ENCODE measurements at regions of chr9 and their contacts with region 1.

Region 1: GRCh38 chr9:81492710-81493447 is 196.5 kb downstream of the TLE1 start:
- DNase-seq: no peak
- H3K4me3 ChIP-seq: no peak overlapping the region
- H3K27ac ChIP-seq: no peak overlapping the region
- H3K4me1 ChIP-seq: peaks cover 0 to 16% of the 10 kb centered on the region in 2 donors
- H3K27me3 ChIP-seq: no peaks in the 10 kb centered on the region
- CTCF ChIP-seq: no peak

Region 2: GRCh38 chr9:81083067-81083466 is 409.8 kb before region 1 on chr9:
- intact Hi-C with region 1: loop called (anchors 10 kb)
- DNase-seq: no peak
- H3K4me3 ChIP-seq: no peak overlapping the region
- H3K27ac ChIP-seq: no peak overlapping the region
- H3K4me1 ChIP-seq: peaks cover 0 to 16% of the 10 kb centered on the region in 2 donors
- H3K27me3 ChIP-seq: no peaks in the 10 kb centered on the region
- CTCF ChIP-seq: peak in 2 of 3 experiments; percentile 13 to 14

Region 3: DNA sequence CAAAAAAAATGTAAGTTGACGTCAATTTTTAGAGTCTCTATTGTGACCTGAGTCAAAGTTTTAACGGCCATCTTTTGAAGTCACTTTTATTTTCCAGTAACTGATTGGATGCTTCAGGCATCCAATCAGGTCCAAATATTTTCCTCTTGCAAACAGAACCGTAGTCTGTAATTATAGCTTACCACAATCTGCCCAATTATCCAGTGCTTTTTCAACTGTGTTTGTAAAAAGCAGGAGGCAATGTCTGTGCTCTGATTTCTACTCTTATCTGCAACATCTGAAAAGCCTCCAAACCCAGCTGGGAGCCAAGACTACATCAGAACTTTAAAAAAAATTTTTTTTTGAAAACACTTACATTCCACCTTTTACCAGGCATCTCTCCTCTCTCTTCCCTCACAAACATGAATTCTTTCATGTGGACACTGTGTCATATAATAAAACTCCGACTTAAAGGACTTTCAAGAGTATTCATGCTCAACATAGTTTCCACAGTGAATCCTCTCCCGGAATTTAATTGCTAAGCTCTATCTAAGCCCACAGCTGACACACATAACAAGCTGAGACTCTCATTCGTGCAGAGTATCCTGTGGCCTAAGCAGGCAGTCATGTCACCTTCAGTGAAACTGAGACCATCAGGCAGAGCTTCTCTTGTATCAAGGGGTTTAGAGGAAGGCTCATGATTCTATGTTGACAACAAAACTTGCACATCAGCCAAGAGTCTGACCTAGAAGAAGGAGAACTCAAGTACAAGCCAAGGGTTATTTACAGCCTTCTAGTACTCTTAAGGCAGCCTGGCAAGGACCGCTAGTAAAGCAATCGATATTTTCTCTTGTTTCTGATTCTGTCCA is 76.2 kb before region 1 on chr9:
- intact Hi-C with region 1: no loop called
- DNase-seq: no peak
- H3K4me3 ChIP-seq: no peak overlapping the region
- H3K27ac ChIP-seq: peak overlapping the region; percentile 33 to 41
- H3K4me1 ChIP-seq: peaks cover 0 to 4% of the 10 kb centered on the region in 2 donors
- H3K27me3 ChIP-seq: no peaks in the 10 kb centered on the region
- CTCF ChIP-seq: no peak

Region 4: GRCh38 chr9:81588148-81588871 is 95.4 kb after region 1 on chr9:
- intact Hi-C with region 1: loop called (anchors 5 kb)
- DNase-seq: peak; percentile 49 to 93
- H3K4me3 ChIP-seq: peak overlapping the region in 1 of 2 donors; percentile 11
- H3K27ac ChIP-seq: peak overlapping the region; percentile 83 to 90
- H3K4me1 ChIP-seq: peaks cover 27 to 58% of the 10 kb centered on the region in 2 donors
- H3K27me3 ChIP-seq: no peaks in the 10 kb centered on the region
- CTCF ChIP-seq: no peak

Region 5: DNA sequence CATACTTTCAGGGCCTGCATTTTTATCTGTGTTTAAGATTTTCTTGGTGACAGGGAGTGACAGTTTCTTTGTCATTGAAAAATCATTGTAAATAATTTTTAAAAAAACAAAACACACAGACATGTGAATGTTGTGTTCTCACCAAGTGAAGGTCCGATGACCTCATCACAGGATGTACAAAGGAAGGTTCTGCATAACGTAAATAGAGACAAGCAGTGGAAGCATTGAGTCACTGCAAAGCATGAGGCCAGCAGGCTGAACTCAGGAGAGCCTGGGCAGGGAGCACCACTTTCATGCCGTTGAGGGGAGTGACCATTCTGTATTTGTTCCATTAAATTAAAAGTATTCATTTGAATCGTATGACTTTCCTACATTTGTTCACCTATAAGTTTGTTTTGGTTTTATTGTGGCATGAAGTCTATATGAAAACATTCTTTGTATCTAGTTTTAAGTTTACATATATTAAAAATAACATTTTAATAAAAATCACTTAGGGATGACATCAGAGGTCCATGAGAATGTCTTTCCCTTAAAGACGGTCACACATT is 266.9 kb after region 1 on chr9:
- intact Hi-C with region 1: loop called (anchors 10 kb)
- DNase-seq: peak; percentile 53 to 82
- H3K4me3 ChIP-seq: no peak overlapping the region
- H3K27ac ChIP-seq: peak overlapping the region; percentile 25 to 58
- H3K4me1 ChIP-seq: peaks cover 0 to 8% of the 10 kb centered on the region in 2 donors
- H3K27me3 ChIP-seq: no peaks in the 10 kb centered on the region
- CTCF ChIP-seq: no peak